ENCODE measurements at regions of chr7 and their contacts with region 1.

Region 1: DNA sequence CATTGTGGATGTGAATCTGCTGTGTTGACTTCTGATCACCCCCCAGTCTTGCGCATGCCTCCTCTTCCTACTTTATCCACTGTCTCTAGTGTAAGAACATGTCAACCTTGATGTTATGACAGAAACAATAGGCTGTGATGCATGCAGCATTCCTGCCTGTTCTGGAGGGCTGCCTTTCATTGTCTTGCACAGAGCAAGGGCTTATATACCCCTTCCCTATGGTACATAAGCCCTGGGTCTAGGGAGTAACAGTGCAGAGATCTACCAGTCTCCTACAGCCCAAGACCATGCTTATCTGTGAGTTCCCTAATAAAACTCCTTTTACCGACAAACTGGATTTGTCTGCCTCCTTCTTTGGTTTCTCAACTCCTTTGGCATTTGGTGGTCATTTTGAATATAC is 177.0 kb upstream of the STK17A start:
- DNase-seq: no peak
- H3K4me3 Mint-ChIP-seq: no peak overlapping the region
- H3K27ac Mint-ChIP-seq: no peak overlapping the region
- H3K4me1 Mint-ChIP-seq: no peaks in the 10 kb centered on the region
- H3K27me3 Mint-ChIP-seq: no peaks in the 10 kb centered on the region

Region 2: GRCh38 chr7:43314379-43315189 is 91.4 kb before region 1 on chr7:
- CTCF ChIA-PET with region 1: no interaction called
- POLR2A ChIA-PET with region 1: no interaction called
- intact Hi-C with region 1: no loop called
- DNase-seq: peak; percentile 60
- H3K4me3 Mint-ChIP-seq: no peak overlapping the region
- H3K27ac Mint-ChIP-seq: no peak overlapping the region
- H3K4me1 Mint-ChIP-seq: peaks cover 18% of the 10 kb centered on the region
- H3K27me3 Mint-ChIP-seq: peaks cover 4% of the 10 kb centered on the region

Region 3: GRCh38 chr7:43431020-43431595 is 25.2 kb after region 1 on chr7:
- CTCF ChIA-PET with region 1: no interaction called
- POLR2A ChIA-PET with region 1: no interaction called
- intact Hi-C with region 1: loop called (anchors 1 kb)
- DNase-seq: no peak
- H3K4me3 Mint-ChIP-seq: no peak overlapping the region
- H3K27ac Mint-ChIP-seq: no peak overlapping the region
- H3K4me1 Mint-ChIP-seq: no peaks in the 10 kb centered on the region
- H3K27me3 Mint-ChIP-seq: peaks cover 4% of the 10 kb centered on the region

Measured in activated CD4-positive, alpha-beta memory T cell treated with anti-CD3 and anti-CD28 coated beads for 36 hours (primary cell).